ENCODE measurements at regions of chr17 and their contacts with region 1.

Region 1: DNA sequence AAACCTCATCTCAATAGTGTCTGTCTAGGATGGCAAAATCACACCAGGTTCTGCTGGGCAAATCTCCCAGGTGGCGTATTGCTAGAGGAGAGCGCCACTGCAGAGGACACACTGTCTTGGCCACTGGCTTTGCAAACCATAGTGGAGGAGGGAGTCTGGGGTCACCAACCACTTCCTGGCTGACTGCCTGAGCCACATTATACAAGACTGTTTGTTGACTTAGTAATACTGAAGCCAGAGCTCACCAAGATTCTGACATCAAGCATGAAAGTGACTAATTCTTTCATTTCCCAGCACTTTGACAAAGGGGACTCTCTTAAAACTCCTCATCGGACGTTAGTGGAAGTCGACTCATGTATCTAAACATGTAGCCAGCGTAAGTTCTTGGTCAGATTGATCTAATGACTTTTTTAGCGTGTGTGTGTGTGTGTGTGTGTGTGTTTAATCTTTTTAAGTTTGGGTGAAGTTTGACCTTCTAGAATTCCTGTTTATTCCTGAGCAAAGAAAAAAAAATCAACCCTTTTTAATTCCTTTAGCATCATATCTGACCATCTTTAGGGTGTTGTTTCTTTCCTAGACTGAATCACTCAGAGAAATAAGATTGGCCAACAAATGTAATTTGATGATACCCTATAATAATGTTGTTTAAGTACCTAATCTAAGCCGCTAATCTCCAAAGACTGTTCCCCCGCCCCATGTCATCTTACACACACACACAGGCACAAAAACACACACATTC is 13.7 kb downstream of the PITPNC1 start:
- DNase-seq: peak; percentile 86
- ATAC-seq: peak; percentile 90
- H3K4me3 Mint-ChIP-seq: peak overlapping the region; percentile 66
- H3K27ac Mint-ChIP-seq: peak overlapping the region; percentile 95
- H3K4me1 Mint-ChIP-seq: peaks cover 88% of the 10 kb centered on the region
- H3K27me3 Mint-ChIP-seq: no peaks in the 10 kb centered on the region

Region 2: DNA sequence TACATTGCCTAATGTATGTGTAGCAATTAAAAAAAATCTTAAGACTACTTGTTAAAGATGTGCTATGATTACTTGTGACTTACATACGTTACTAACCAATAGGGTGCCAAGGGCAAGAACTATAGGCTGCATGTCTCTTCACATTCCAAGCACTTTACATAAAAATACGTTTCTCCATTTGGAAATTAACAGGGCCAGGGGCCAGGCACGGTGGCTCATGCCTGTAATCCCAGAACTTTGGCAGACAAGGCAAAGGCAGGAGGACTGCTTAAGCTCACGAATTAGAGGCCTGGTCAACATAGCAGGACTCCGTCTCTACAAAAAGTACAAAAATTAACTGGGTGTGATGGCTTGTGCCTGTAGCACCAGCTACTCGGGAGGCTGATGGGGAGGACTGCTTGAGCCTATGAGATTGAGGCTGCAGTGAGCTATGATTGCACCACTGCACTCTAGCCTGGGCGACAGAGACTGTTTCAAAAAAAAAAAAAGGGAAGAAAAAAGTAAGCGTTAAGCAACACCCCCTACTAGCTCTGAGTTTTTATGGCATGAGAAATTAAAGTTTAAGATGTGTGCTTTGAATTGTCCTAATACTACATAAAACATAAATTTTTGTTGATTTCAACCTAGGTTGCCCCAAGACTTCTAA is 36.8 kb before region 1 on chr17:
- CTCF ChIA-PET with region 1: no interaction called
- POLR2A ChIA-PET with region 1: no interaction called
- intact Hi-C with region 1: no loop called
- DNase-seq: no peak
- ATAC-seq: no peak
- H3K4me3 Mint-ChIP-seq: no peak overlapping the region
- H3K27ac Mint-ChIP-seq: no peak overlapping the region
- H3K4me1 Mint-ChIP-seq: peaks cover 21% of the 10 kb centered on the region
- H3K27me3 Mint-ChIP-seq: no peaks in the 10 kb centered on the region

Region 3: DNA sequence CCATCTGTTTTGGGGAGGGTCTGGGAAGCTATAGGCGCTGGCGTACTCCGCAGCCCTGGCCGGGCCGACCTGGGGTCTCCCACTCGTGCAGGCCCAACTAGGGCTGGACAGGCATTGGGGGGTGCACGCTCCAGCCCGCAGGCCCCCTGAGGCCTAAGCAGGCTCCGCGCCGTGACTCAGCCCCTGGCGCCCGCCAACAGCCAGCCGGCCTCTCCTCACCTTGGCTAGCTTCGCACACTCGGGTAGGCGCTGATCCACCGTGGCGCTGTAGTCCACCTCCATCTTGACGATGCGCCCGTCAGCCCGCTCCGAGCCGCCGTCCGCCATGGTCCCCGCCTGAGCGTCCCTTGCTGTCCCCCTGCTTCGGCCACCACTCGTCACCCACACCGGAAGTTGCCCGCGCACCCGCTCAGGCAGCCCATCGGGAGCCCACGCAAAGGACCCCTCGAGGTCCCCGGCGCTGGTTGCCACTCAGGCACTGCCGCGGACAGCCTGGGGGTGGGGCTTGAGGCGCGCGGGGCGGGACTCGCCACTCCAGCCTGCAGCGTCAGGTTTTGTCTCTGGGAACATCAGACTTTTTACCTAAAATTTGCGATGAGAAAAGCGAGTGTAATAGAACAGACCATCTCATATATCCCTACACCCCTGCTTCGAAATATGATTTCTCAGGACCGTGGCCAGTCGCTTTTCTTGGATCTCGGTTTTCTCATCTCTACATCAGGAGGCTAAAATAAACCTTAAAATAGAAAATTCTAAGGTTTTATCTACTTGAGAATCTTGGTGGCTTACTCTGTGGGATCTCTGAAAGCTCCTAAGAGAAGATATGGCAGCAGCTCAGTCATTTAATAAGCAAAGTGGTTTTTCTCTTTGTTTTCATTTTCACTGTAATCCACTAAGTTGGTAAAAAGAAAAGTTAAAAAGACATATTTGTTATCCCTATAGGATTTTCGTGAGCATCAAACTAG is 24.3 kb before region 1 on chr17 and contains the start of gene PSMD12:
- CTCF ChIA-PET with region 1: interaction called, 6 read pairs
- POLR2A ChIA-PET with region 1: interaction called, 3 read pairs
- intact Hi-C with region 1: loop called in 1 of 2 experiments (anchors 1 kb)
- DNase-seq: peak; percentile 96
- ATAC-seq: peak; percentile 78
- H3K4me3 Mint-ChIP-seq: peak within 1 kb of the TSS; percentile 94
- H3K27ac Mint-ChIP-seq: peak within 1 kb of the TSS; percentile 96
- H3K4me1 Mint-ChIP-seq: peaks cover 43% of the 10 kb centered on the region
- H3K27me3 Mint-ChIP-seq: no peaks in the 10 kb centered on the region
- total RNA-seq, gene PSMD12: 100 to 101 TPM

Region 4: DNA sequence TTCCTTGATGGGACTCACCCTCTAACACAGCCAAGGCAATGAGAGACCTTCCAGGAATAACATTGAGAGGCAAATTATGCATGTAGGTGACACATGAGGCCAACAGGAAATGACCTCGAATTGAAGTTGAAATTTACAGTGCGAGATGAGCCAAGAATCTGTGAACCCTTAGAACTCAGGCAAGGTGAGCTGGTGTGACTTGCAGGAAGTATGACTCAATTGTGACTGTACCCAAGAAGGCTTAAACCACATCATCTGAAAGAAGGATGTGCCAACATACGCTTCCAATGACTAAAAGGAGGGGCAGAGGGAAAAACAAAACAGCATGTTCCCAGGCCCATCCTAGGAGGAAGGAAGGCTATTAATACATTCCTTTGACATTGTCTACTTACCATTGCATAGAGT is 31.1 kb after region 1 on chr17:
- CTCF ChIA-PET with region 1: interaction called, 8 read pairs
- POLR2A ChIA-PET with region 1: interaction called, 9 read pairs
- intact Hi-C with region 1: loop called (anchors 1 kb)
- DNase-seq: peak; percentile 70
- ATAC-seq: peak; percentile 96
- H3K4me3 Mint-ChIP-seq: peak overlapping the region; percentile 20
- H3K27ac Mint-ChIP-seq: peak overlapping the region; percentile 88
- H3K4me1 Mint-ChIP-seq: peaks cover 75% of the 10 kb centered on the region
- H3K27me3 Mint-ChIP-seq: no peaks in the 10 kb centered on the region

Region 5: DNA sequence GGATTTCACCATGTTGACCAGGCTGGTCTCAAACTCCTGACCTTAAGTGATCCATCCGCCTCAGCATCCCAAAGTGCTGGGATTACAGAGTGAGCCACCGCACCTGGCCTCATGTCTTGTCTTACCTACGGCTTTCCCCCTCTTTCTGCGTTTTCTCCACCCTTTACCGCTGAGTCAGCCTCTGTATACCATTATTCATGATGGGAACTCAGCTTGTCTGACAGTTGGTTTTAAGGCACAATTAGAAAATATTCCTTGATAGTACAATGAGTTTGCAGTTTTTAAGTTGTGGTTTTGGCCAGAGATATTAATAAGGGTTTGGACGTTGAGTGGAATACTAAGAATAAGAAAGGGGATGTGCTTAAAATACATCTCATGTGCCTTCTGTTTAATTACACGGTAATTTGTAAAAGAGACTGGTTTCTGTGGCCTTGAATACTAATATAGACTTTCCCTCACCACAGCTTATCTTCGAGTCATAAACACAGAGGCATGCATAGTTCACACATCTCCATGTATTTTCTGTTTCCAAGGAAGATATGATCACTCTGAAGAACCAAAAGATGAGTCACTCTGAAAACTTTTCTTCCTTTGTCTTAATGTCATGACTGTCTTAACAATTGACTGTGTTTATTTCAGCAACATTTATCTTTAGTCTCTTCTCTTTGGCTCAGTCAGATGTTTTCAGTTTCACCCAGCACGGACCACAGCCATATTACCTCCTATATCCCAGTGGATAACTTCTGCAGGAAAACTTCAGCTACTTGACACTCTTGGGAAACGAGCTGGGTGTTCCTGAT is 40.6 kb after region 1 on chr17:
- CTCF ChIA-PET with region 1: interaction called, 63 read pairs
- POLR2A ChIA-PET with region 1: interaction called, 6 read pairs
- intact Hi-C with region 1: loop called (anchors 1 kb)
- DNase-seq: no peak
- ATAC-seq: peak; percentile 76
- H3K4me3 Mint-ChIP-seq: peak overlapping the region; percentile 9
- H3K27ac Mint-ChIP-seq: peak overlapping the region; percentile 89
- H3K4me1 Mint-ChIP-seq: peaks cover 74% of the 10 kb centered on the region
- H3K27me3 Mint-ChIP-seq: no peaks in the 10 kb centered on the region

Region 6: GRCh38 chr17:67441052-67441927 is 50.5 kb after region 1 on chr17:
- CTCF ChIA-PET with region 1: interaction called, 63 read pairs
- POLR2A ChIA-PET with region 1: interaction called, 7 read pairs
- intact Hi-C with region 1: loop called in 1 of 2 experiments (anchors 2 kb)
- DNase-seq: peak; percentile 85
- ATAC-seq: peak; percentile 91
- H3K4me3 Mint-ChIP-seq: peak overlapping the region; percentile 76
- H3K27ac Mint-ChIP-seq: peak overlapping the region; percentile 98
- H3K4me1 Mint-ChIP-seq: peaks cover 80% of the 10 kb centered on the region
- H3K27me3 Mint-ChIP-seq: no peaks in the 10 kb centered on the region

Region 7: DNA sequence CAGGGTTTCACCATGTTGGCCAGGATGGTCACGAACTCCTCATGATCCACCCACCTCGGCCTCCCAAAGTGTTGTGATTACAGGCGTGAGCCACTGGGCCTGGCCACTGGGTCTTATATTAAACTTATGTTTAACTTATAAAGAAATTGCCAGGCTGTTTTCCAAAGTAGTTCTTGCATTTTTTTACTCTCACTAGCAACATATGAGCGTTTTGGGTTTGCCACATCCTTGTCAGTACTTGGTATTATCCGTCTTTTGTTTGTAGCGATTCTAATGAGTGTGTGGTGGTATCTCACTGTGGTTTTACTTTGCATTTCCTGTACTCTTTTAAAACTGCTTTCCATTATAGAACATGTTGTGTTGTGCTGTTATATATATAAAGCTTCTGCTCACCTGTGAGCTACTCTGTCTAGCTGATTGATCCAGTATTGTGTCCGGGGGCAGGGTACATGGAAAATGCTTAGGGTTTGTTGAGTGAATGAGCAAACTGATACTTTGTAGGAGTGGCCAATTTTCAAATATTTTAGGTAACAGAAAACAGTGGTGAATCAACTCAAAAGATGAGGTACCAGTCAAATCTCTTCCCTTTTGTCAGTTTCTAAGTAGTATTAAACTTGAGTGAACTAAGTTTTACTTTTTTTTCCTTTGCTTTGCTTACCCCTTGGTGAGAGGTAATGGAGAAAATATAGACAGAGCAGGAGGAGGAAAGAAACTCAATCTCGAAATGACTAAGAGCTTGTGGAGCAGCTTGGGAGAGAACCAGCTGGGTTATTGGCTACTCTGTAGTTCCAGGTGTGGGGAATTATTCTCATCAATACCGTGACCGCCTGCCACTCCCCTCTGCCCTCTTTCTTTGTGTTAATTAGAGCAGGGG is 62.1 kb after region 1 on chr17:
- CTCF ChIA-PET with region 1: interaction called, 6 read pairs
- POLR2A ChIA-PET with region 1: no interaction called
- intact Hi-C with region 1: loop called in 1 of 2 experiments (anchors 1 kb)
- DNase-seq: peak; percentile 64
- ATAC-seq: peak; percentile 85
- H3K4me3 Mint-ChIP-seq: peak overlapping the region; percentile 50
- H3K27ac Mint-ChIP-seq: peak overlapping the region; percentile 93
- H3K4me1 Mint-ChIP-seq: peaks cover 87% of the 10 kb centered on the region
- H3K27me3 Mint-ChIP-seq: no peaks in the 10 kb centered on the region

Region 8: GRCh38 chr17:67481808-67482207 is 91.0 kb after region 1 on chr17:
- CTCF ChIA-PET with region 1: interaction called, 107 read pairs
- POLR2A ChIA-PET with region 1: no interaction called
- intact Hi-C with region 1: loop called in 1 of 2 experiments (anchors 1 kb)
- DNase-seq: no peak
- ATAC-seq: no peak
- H3K4me3 Mint-ChIP-seq: peak overlapping the region; percentile 21
- H3K27ac Mint-ChIP-seq: peak overlapping the region; percentile 90
- H3K4me1 Mint-ChIP-seq: peaks cover 71% of the 10 kb centered on the region
- H3K27me3 Mint-ChIP-seq: no peaks in the 10 kb centered on the region